Sigmoid colon (tissue), 7 donors: ENCODE measurements at regions of chr20 and their contacts with region 1.

Region 1: GRCh38 chr20:16761305-16761829 is 13.2 kb downstream of the OTOR start:
- DNase-seq: no peak
- H3K4me3 ChIP-seq: no peak overlapping the region
- H3K27ac ChIP-seq: no peak overlapping the region
- H3K4me1 ChIP-seq: peaks cover 0 to 5% (median 2%) of the 10 kb centered on the region in 4 donors
- H3K27me3 ChIP-seq: no peaks in the 10 kb centered on the region
- CTCF ChIP-seq: peak; percentile 44 to 69 (median 59)
- EP300 ChIP-seq: no peak
- POLR2A ChIP-seq: no peak

Region 2: GRCh38 chr20:16517946-16518783 is 243.2 kb before region 1 on chr20:
- intact Hi-C with region 1: loop called (anchors 5 kb)
- DNase-seq: no peak
- H3K4me3 ChIP-seq: no peak overlapping the region
- H3K27ac ChIP-seq: no peak overlapping the region
- H3K4me1 ChIP-seq: no peaks in the 10 kb centered on the region
- H3K27me3 ChIP-seq: no peaks in the 10 kb centered on the region
- CTCF ChIP-seq: peak; percentile 16 to 39 (median 24)
- EP300 ChIP-seq: no peak
- POLR2A ChIP-seq: no peak

Region 3: DNA sequence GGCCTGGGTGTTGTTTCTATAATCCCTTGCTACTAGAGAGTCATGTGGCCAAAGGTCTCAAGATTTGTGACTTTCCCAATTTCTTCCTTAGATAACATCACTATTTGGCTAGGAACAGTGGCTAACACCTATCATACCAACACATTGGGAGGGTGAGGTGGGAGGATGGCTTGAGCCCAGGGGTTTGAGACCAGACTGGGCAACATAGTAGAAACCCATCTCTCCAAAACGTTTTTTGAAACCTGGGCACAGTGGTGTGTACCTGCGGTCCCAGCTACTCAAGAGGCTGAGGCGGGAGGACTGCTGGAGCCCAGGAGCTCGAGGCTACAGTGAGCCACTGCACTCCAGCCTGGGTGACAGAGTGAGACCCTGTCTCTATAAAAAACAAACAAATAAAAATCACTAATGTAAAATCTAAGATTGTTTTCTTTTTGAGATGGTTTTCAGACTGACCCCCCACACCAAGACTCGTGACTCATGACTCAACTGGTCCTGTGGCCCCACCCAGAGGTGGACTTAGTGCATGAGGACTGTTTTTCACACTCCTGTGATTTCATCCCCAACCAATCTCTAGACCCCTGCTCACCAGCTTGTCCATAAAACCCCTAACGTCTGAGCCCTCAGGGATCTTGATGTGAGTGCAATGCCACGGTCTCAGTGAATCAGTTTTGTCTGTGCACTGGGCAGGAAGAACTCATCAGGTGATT is 139.8 kb before region 1 on chr20:
- intact Hi-C with region 1: no loop called
- DNase-seq: no peak
- H3K4me3 ChIP-seq: no peak overlapping the region
- H3K27ac ChIP-seq: no peak overlapping the region
- H3K4me1 ChIP-seq: no peaks in the 10 kb centered on the region
- H3K27me3 ChIP-seq: no peaks in the 10 kb centered on the region
- CTCF ChIP-seq: no peak
- EP300 ChIP-seq: no peak
- POLR2A ChIP-seq: no peak